CD4-positive, alpha-beta memory T cell (primary cell): ENCODE measurements at regions of chr11 and their contacts with region 1.

Region 1: DNA sequence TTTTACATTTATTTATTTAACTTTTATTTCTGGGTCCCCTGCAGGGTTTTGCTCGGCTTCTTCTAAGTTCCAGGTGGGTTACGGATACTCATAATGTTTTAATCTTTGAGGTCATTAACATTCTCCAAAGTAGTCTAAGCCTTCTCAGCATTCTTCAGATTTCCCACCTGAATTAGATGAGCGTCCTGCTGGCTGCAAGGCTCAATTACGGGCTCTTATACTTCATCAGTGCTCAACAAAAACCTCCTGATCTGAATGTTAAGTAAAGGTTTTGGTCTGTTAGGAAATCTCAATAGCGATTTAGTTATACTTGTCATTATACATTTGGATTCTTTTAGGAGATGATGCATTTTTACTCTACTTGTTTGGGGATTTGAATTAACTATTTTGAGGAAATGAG is 27.3 kb upstream of the NFRKB start:
- DNase-seq: no peak
- H3K4me3 ChIP-seq: no peak overlapping the region
- H3K4me3 Mint-ChIP-seq: no peak overlapping the region
- H3K27ac ChIP-seq: no peak overlapping the region
- H3K27ac Mint-ChIP-seq: peak overlapping the region in 2 of 7 donors; percentile 1 to 2
- H3K4me1 ChIP-seq: peaks cover 10% of the 10 kb centered on the region
- H3K4me1 Mint-ChIP-seq: peaks cover 3 to 5% (median 4%) of the 10 kb centered on the region in 4 donors
- H3K27me3 ChIP-seq: no peaks in the 10 kb centered on the region
- H3K27me3 Mint-ChIP-seq: no peaks in the 10 kb centered on the region

Region 2: GRCh38 chr11:129691142-129691541 is 231.5 kb before region 1 on chr11:
- CTCF ChIA-PET with region 1: no interaction called
- POLR2A ChIA-PET with region 1: no interaction called
- intact Hi-C with region 1: no loop called
- DNase-seq: no peak
- H3K4me3 ChIP-seq: no peak overlapping the region
- H3K4me3 Mint-ChIP-seq: no peak overlapping the region
- H3K27ac ChIP-seq: no peak overlapping the region
- H3K27ac Mint-ChIP-seq: no peak overlapping the region
- H3K4me1 ChIP-seq: peaks cover 6% of the 10 kb centered on the region
- H3K4me1 Mint-ChIP-seq: peaks cover 7 to 16% (median 9%) of the 10 kb centered on the region in 4 donors
- H3K27me3 ChIP-seq: no peaks in the 10 kb centered on the region
- H3K27me3 Mint-ChIP-seq: no peaks in the 10 kb centered on the region

Region 3: GRCh38 chr11:130069684-130070108 is 147.0 kb after region 1 on chr11 and contains the start of gene APLP2:
- CTCF ChIA-PET with region 1: interaction called, 3 read pairs
- POLR2A ChIA-PET with region 1: no interaction called
- intact Hi-C with region 1: loop called (anchors 1 kb)
- DNase-seq: peak; percentile 96 to 99 (median 96)
- H3K4me3 ChIP-seq: peak within 1 kb of the TSS; percentile 65 to 89
- H3K4me3 Mint-ChIP-seq: peak within 1 kb of the TSS; percentile 93 to 99 (median 98)
- H3K27ac ChIP-seq: peak within 1 kb of the TSS; percentile 74
- H3K27ac Mint-ChIP-seq: peak within 1 kb of the TSS; percentile 94 to 98 (median 97)
- H3K4me1 ChIP-seq: peaks cover 17% of the 10 kb centered on the region
- H3K4me1 Mint-ChIP-seq: peaks cover 16 to 33% (median 20%) of the 10 kb centered on the region in 4 donors
- H3K27me3 ChIP-seq: no peaks in the 10 kb centered on the region
- H3K27me3 Mint-ChIP-seq: no peaks in the 10 kb centered on the region
- total RNA-seq, gene APLP2: 58.7 to 65.3 TPM

Region 4: GRCh38 chr11:130118636-130119387 is 196.1 kb after region 1 on chr11:
- CTCF ChIA-PET with region 1: interaction called, 10 read pairs
- POLR2A ChIA-PET with region 1: no interaction called
- intact Hi-C with region 1: no loop called
- DNase-seq: peak; percentile 21 to 52 (median 35)
- H3K4me3 ChIP-seq: no peak overlapping the region
- H3K4me3 Mint-ChIP-seq: peak overlapping the region in 7 of 8 donors; percentile 1 to 66 (median 44)
- H3K27ac ChIP-seq: no peak overlapping the region
- H3K27ac Mint-ChIP-seq: peak overlapping the region in 1 of 7 donors; percentile 15
- H3K4me1 ChIP-seq: peaks cover 40% of the 10 kb centered on the region
- H3K4me1 Mint-ChIP-seq: peaks cover 31 to 45% (median 39%) of the 10 kb centered on the region in 4 donors
- H3K27me3 ChIP-seq: no peaks in the 10 kb centered on the region
- H3K27me3 Mint-ChIP-seq: no peaks in the 10 kb centered on the region